ENCODE measurements at regions of chrX and their contacts with region 1.

Region 1: DNA sequence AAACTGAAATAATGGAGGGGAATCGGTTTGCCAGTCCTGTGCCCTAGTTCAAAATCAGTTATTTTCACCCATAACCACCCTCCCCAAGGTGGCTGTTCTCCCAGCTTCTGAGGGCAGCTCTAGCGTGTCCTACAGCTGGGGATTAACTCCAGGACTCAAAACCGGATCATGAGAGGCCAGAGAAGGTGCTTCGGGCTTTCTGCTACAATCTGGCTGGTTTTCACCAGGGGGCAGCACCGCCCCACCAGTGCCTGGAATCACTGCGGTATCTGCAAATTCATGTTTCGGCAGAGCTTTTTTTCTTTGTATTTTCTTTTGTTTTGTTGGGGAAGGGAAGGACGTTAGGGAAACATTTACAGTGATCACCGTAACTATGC is 28.4 kb downstream of the PDHA1 start:
- DNase-seq: peak; percentile 62 to 87 (median 78)
- H3K4me3 ChIP-seq: peak overlapping the region in 1 of 4 donors; percentile 28
- H3K27ac ChIP-seq: peak overlapping the region in 4 of 5 donors; percentile 40 to 86 (median 63)
- H3K4me1 ChIP-seq: peaks cover 4 to 11% of the 10 kb centered on the region in 2 donors
- H3K27me3 ChIP-seq: no peaks in the 10 kb centered on the region
- CTCF ChIP-seq: peak; percentile 43 to 77 (median 72)
- POLR2A ChIP-seq: no peak

Region 2: GRCh38 chrX:19532709-19533108 is 160.6 kb after region 1 on chrX:
- intact Hi-C with region 1: loop called in 1 of 2 experiments (anchors 5 kb)
- DNase-seq: peak in 1 of 7 donors; percentile 20
- H3K4me3 ChIP-seq: no peak overlapping the region
- H3K27ac ChIP-seq: no peak overlapping the region
- H3K4me1 ChIP-seq: no peaks in the 10 kb centered on the region
- H3K27me3 ChIP-seq: no peaks in the 10 kb centered on the region
- CTCF ChIP-seq: no peak
- POLR2A ChIP-seq: no peak